Uterus (tissue), 4 donors: ENCODE measurements at regions of chr7 and their contacts with region 1.

Region 1: GRCh38 chr7:116236020-116236630 is 25.8 kb downstream of the TES start:
- DNase-seq: peak; percentile 33 to 70
- H3K4me3 ChIP-seq: no peak overlapping the region
- H3K27ac ChIP-seq: peak overlapping the region in 1 of 2 donors; percentile 61
- H3K4me1 ChIP-seq: no peaks in the 10 kb centered on the region
- H3K27me3 ChIP-seq: no peaks in the 10 kb centered on the region
- CTCF ChIP-seq: peak; percentile 50 to 70 (median 64)
- POLR2A ChIP-seq: no peak

Region 2: GRCh38 chr7:115924411-115924810 is 311.7 kb before region 1 on chr7:
- intact Hi-C with region 1: no loop called
- DNase-seq: no peak
- H3K4me3 ChIP-seq: no peak overlapping the region
- H3K27ac ChIP-seq: no peak overlapping the region
- H3K4me1 ChIP-seq: no peaks in the 10 kb centered on the region
- H3K27me3 ChIP-seq: no peaks in the 10 kb centered on the region
- CTCF ChIP-seq: no peak
- POLR2A ChIP-seq: no peak

Region 3: DNA sequence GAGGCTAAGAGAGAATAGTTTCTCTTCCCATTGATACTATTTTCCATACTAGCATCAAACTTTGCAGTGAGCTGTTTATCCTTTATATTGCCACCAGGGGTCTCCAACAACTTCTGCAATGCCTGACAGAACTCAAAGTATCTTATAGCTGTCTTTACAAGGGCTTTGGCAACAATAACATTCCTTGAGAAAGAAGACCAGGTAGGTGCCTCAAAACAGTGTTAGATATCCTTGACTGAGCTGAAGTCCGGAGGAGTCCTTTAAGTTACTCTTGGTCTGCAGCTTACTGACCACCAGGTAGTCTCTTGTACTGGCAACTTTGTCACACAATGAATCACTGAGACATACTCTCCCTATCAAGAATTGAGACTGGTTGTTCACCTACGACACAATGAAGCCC is 55.8 kb before region 1 on chr7:
- intact Hi-C with region 1: loop called (anchors 5 kb)
- DNase-seq: peak in 1 of 2 donors; percentile 21
- H3K4me3 ChIP-seq: no peak overlapping the region
- H3K27ac ChIP-seq: no peak overlapping the region
- H3K4me1 ChIP-seq: no peaks in the 10 kb centered on the region
- H3K27me3 ChIP-seq: no peaks in the 10 kb centered on the region
- CTCF ChIP-seq: peak; percentile 66 to 84 (median 76)
- POLR2A ChIP-seq: no peak